ENCODE measurements at regions of chr3 and their contacts with region 1.

Region 1: GRCh38 chr3:50639055-50639494 is 22.1 kb downstream of the MAPKAPK3 start:
- DNase-seq: no peak
- ATAC-seq: no peak
- H3K4me3 ChIP-seq: no peak overlapping the region
- H3K4me3 Mint-ChIP-seq: no peak overlapping the region
- H3K27ac ChIP-seq: no peak overlapping the region
- H3K27ac Mint-ChIP-seq: peak overlapping the region; percentile 55
- H3K4me1 ChIP-seq: peaks cover 44% of the 10 kb centered on the region
- H3K4me1 Mint-ChIP-seq: peaks cover 33% of the 10 kb centered on the region
- H3K27me3 ChIP-seq: no peaks in the 10 kb centered on the region
- H3K27me3 Mint-ChIP-seq: no peaks in the 10 kb centered on the region
- CTCF ChIP-seq: no peak

Region 2: GRCh38 chr3:49844464-49845183 is 794.5 kb before region 1 on chr3:
- CTCF ChIA-PET with region 1: no interaction called
- POLR2A ChIA-PET with region 1: no interaction called
- intact Hi-C with region 1: loop called in 1 of 2 experiments (anchors 5 kb)
- DNase-seq: no peak
- ATAC-seq: no peak
- H3K4me3 ChIP-seq: no peak overlapping the region
- H3K4me3 Mint-ChIP-seq: no peak overlapping the region
- H3K27ac ChIP-seq: no peak overlapping the region
- H3K27ac Mint-ChIP-seq: no peak overlapping the region
- H3K4me1 ChIP-seq: no peaks in the 10 kb centered on the region
- H3K4me1 Mint-ChIP-seq: no peaks in the 10 kb centered on the region
- H3K27me3 ChIP-seq: no peaks in the 10 kb centered on the region
- H3K27me3 Mint-ChIP-seq: no peaks in the 10 kb centered on the region
- CTCF ChIP-seq: no peak

Region 3: DNA sequence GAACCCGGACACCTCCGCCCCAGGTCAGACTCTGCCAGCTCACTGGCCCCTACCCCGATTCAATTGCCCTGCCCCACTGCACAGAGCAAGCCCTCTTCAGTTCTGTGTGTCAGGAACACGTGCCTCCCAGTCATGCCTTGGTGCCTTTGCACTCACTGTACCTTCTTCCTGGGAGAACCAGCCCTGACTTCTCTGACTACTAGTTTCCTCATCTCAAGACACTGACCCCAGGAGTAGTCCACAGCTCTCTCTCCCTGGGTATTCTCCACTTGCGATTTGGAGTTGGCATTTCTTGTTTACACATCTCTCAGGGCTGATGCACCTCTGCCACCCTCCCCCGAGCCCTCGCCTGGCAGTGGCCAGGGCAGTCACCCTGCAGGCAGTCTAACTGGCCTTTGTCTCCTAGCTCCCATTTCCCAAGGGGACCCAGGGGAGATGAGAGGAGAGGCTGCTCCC is 33.2 kb before region 1 on chr3:
- CTCF ChIA-PET with region 1: no interaction called
- POLR2A ChIA-PET with region 1: no interaction called
- intact Hi-C with region 1: no loop called
- DNase-seq: peak in 1 of 14 experiments; percentile 40
- ATAC-seq: no peak
- H3K4me3 ChIP-seq: peak overlapping the region; percentile 87
- H3K4me3 Mint-ChIP-seq: peak overlapping the region; percentile 76
- H3K27ac ChIP-seq: peak overlapping the region; percentile 73 to 86
- H3K27ac Mint-ChIP-seq: peak overlapping the region; percentile 93
- H3K4me1 ChIP-seq: peaks cover 100% of the 10 kb centered on the region
- H3K4me1 Mint-ChIP-seq: peaks cover 99% of the 10 kb centered on the region
- H3K27me3 ChIP-seq: no peaks in the 10 kb centered on the region
- H3K27me3 Mint-ChIP-seq: no peaks in the 10 kb centered on the region
- CTCF ChIP-seq: no peak

Region 4: GRCh38 chr3:50696276-50696675 is 57.2 kb after region 1 on chr3:
- CTCF ChIA-PET with region 1: no interaction called
- POLR2A ChIA-PET with region 1: no interaction called
- intact Hi-C with region 1: no loop called
- DNase-seq: no peak
- ATAC-seq: no peak
- H3K4me3 ChIP-seq: no peak overlapping the region
- H3K4me3 Mint-ChIP-seq: no peak overlapping the region
- H3K27ac ChIP-seq: no peak overlapping the region
- H3K27ac Mint-ChIP-seq: no peak overlapping the region
- H3K4me1 ChIP-seq: no peaks in the 10 kb centered on the region
- H3K4me1 Mint-ChIP-seq: no peaks in the 10 kb centered on the region
- H3K27me3 ChIP-seq: no peaks in the 10 kb centered on the region
- H3K27me3 Mint-ChIP-seq: peaks cover 9% of the 10 kb centered on the region
- CTCF ChIP-seq: no peak

Region 5: GRCh38 chr3:51075228-51075775 is 436.2 kb after region 1 on chr3:
- CTCF ChIA-PET with region 1: no interaction called
- POLR2A ChIA-PET with region 1: no interaction called
- intact Hi-C with region 1: no loop called
- DNase-seq: no peak
- ATAC-seq: no peak
- H3K4me3 ChIP-seq: no peak overlapping the region
- H3K4me3 Mint-ChIP-seq: no peak overlapping the region
- H3K27ac ChIP-seq: no peak overlapping the region
- H3K27ac Mint-ChIP-seq: no peak overlapping the region
- H3K4me1 ChIP-seq: no peaks in the 10 kb centered on the region
- H3K4me1 Mint-ChIP-seq: no peaks in the 10 kb centered on the region
- H3K27me3 ChIP-seq: no peaks in the 10 kb centered on the region
- H3K27me3 Mint-ChIP-seq: no peaks in the 10 kb centered on the region
- CTCF ChIP-seq: no peak

Measured in CD4-positive, alpha-beta T cell (primary cell).